ENCODE measurements at regions of chr11 and their contacts with region 1.

Region 1: DNA sequence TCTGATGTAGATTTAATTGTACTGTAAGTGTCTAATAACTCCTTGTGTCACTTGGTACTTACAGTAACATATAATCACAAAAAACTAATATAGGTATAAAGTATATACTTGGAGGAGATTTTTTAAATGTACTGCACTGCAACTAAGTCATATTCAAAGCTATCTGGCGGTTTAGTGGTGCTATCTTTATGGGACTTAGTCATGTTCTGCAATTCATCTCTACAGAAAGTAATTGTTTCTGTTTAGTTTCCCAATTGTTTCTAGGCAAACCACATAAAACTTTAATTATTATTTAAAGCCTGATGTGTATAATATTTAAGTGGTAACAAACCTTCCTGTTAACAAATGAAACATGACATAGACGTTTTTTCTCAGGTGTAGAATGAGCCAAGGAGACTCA is 8.0 kb downstream of the PAFAH1B2 start:
- DNase-seq: no peak
- H3K4me3 ChIP-seq: no peak overlapping the region
- H3K27ac ChIP-seq: no peak overlapping the region
- H3K4me1 ChIP-seq: peaks cover 30 to 44% of the 10 kb centered on the region in 2 donors
- H3K27me3 ChIP-seq: no peaks in the 10 kb centered on the region
- CTCF ChIP-seq: no peak
- POLR2A ChIP-seq: no peak

Region 2: GRCh38 chr11:117189191-117189930 is 37.3 kb after region 1 on chr11:
- intact Hi-C with region 1: loop called (anchors 5 kb)
- DNase-seq: peak in 1 of 2 donors; percentile 3
- H3K4me3 ChIP-seq: no peak overlapping the region
- H3K27ac ChIP-seq: no peak overlapping the region
- H3K4me1 ChIP-seq: no peaks in the 10 kb centered on the region
- H3K27me3 ChIP-seq: no peaks in the 10 kb centered on the region
- CTCF ChIP-seq: no peak
- POLR2A ChIP-seq: no peak

Measured in thyroid gland (tissue), 4 donors.